Gastrocnemius medialis (tissue), 4 donors: ENCODE measurements at regions of chr7 and their contacts with region 1.

Region 1: DNA sequence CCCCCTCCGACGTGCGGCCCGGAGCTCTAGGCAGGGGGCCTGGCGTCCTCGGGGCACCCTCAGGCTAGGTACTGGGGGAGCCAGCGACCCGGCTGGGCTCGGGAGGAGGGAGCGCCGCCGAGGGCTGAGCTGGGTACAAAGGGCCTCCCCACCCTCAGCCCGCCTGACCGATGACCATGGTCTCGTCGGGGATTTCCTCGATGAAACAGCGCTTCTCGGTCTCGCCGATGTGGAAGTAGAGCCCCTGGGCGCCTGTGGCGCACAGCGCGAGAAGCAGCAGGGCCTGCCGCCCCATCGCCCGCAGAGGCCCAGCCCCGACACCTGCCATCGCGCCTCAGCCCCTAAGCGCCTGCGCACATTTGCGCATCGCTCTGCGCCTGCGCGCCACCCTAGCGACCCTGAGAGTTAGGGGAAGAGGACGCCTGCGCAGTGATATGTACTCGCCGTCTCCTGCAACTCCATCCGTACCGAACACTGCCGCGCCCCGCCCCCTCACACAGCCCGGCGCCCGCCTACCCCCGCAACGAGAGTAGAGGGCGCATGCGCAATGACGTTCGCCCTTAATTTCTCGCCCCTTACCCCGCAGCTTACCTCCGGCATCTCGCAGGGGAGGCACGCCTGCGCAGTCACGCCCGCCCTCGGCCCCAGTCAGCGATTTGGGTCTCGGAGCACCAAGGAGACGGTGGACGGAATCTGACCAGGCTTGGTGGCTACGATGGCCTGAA is at the start of gene TMED4:
- DNase-seq: peak; percentile 100
- ATAC-seq: peak; percentile 92 to 96
- H3K4me3 ChIP-seq: peak within 1 kb of the TSS; percentile 67 to 98 (median 81)
- H3K27ac ChIP-seq: peak within 1 kb of the TSS; percentile 95 to 98 (median 97)
- H3K4me1 ChIP-seq: peaks cover 14 to 28% of the 10 kb centered on the region in 2 donors
- H3K27me3 ChIP-seq: no peaks in the 10 kb centered on the region
- CTCF ChIP-seq: no peak
- POLR2A ChIP-seq: peak; percentile 86 to 93
- total RNA-seq, gene TMED4: 85.8 to 162 (median 101) TPM

Region 2: GRCh38 chr7:44082541-44083207 is 499.4 kb before region 1 on chr7:
- in situ Hi-C with region 1: no loop called
- intact Hi-C with region 1: loop called (anchors 1 kb)
- DNase-seq: peak; percentile 99
- ATAC-seq: peak; percentile 89 to 92
- H3K4me3 ChIP-seq: peak overlapping the region; percentile 60 to 98 (median 83)
- H3K27ac ChIP-seq: peak overlapping the region; percentile 90 to 96 (median 94)
- H3K4me1 ChIP-seq: peaks cover 40 to 41% of the 10 kb centered on the region in 2 donors
- H3K27me3 ChIP-seq: no peaks in the 10 kb centered on the region
- CTCF ChIP-seq: no peak
- POLR2A ChIP-seq: peak; percentile 63 to 80

Region 3: GRCh38 chr7:44665531-44666213 is 83.6 kb after region 1 on chr7:
- in situ Hi-C with region 1: no loop called
- intact Hi-C with region 1: no loop called
- DNase-seq: peak in 1 of 2 donors; percentile 6
- ATAC-seq: no peak
- H3K4me3 ChIP-seq: no peak overlapping the region
- H3K27ac ChIP-seq: peak overlapping the region; percentile 16 to 59 (median 42)
- H3K4me1 ChIP-seq: peaks cover 12 to 18% of the 10 kb centered on the region in 2 donors
- H3K27me3 ChIP-seq: no peaks in the 10 kb centered on the region
- CTCF ChIP-seq: no peak
- POLR2A ChIP-seq: no peak

Region 4: DNA sequence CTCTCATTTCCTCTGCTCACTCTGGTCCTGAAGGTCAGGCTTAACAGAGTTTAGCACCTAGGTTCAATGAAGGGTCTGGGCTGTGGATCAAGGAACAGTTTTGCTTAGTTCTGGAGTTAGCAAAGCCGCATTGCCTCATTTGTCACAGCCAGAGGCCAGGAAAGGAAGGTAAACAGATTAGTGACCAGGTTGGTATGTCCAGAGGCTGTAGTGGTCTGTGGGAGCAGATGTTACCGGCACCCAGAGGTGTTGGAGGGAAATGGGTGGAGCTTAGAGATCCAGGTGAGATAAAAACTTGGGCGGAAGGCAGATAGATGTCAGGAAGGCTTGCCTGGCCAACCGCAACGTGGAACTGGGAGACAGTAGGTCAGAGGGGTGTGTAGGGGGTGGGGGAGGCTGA is 130.0 kb after region 1 on chr7:
- in situ Hi-C with region 1: loop called in 1 of 4 experiments (anchors 25 kb)
- intact Hi-C with region 1: no loop called
- DNase-seq: no peak
- ATAC-seq: no peak
- H3K4me3 ChIP-seq: no peak overlapping the region
- H3K27ac ChIP-seq: peak overlapping the region in 3 of 4 donors; percentile 22 to 44 (median 26)
- H3K4me1 ChIP-seq: peaks cover 3 to 10% of the 10 kb centered on the region in 2 donors
- H3K27me3 ChIP-seq: no peaks in the 10 kb centered on the region
- CTCF ChIP-seq: no peak
- POLR2A ChIP-seq: no peak

Region 5: GRCh38 chr7:44769776-44770662 is 188.0 kb after region 1 on chr7:
- in situ Hi-C with region 1: loop called in 1 of 4 experiments (anchors 25 kb)
- intact Hi-C with region 1: no loop called
- DNase-seq: no peak
- ATAC-seq: no peak
- H3K4me3 ChIP-seq: peak overlapping the region in 1 of 4 donors; percentile 16
- H3K27ac ChIP-seq: peak overlapping the region; percentile 74 to 80 (median 79)
- H3K4me1 ChIP-seq: peaks cover 37 to 40% of the 10 kb centered on the region in 2 donors
- H3K27me3 ChIP-seq: no peaks in the 10 kb centered on the region
- CTCF ChIP-seq: no peak
- POLR2A ChIP-seq: no peak

Region 6: GRCh38 chr7:44847508-44847920 is 265.5 kb after region 1 on chr7:
- in situ Hi-C with region 1: loop called in 2 of 4 experiments (anchors 5 to 10 kb)
- intact Hi-C with region 1: loop called (anchors 1 kb)
- DNase-seq: peak; percentile 82 to 87
- ATAC-seq: peak; percentile 78 to 82
- H3K4me3 ChIP-seq: peak overlapping the region; percentile 65 to 72 (median 66)
- H3K27ac ChIP-seq: peak overlapping the region; percentile 90 to 93 (median 92)
- H3K4me1 ChIP-seq: peaks cover 24 to 43% of the 10 kb centered on the region in 2 donors
- H3K27me3 ChIP-seq: no peaks in the 10 kb centered on the region
- CTCF ChIP-seq: peak; percentile 92 to 98 (median 98)
- POLR2A ChIP-seq: no peak

Region 7: DNA sequence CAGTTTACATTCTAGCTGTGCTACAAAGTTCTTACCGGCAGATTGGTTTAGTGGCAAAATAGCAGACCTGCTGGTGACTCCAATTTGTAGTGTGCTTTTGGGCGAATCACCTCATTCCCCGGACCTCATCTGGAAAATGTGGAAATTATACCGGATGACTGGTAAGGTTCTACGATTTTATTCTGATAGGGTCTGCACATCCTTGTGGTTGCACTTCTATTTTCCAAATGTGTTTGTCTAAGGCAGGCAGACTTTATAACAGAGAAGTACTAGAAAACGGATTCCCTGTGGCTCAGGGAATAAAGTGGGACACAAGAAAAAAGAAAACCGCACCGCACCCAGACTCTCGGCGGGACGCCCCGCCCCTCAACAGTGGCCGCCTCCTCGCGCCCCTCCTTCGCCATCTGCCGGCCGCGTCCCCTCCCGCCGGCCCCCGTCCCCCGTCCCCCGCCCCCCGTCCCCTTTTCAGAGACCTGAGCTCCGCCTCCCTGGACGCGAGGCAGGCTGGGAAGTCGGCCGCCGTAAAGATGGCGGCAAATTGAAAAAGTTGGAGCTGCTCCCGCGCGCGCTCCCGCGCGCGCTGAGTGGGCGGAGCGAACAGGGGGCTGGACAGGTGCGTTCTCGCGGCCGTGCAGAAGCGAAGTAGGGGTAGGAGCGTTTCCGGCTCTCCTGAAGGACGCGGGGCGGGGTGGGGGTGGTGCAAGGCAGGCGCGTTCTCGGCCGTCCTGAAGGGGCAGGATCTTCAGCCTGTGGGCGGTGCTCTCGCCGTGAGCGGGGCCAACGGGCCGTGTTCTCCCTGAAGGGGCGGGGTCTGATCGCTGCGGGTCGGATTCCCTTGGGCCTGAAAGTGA is 417.4 kb after region 1 on chr7:
- in situ Hi-C with region 1: loop called in 1 of 4 experiments (anchors 10 kb)
- intact Hi-C with region 1: loop called (anchors 2 kb)
- DNase-seq: peak; percentile 99
- ATAC-seq: peak; percentile 93 to 95
- H3K4me3 ChIP-seq: peak overlapping the region; percentile 58 to 71 (median 62)
- H3K27ac ChIP-seq: peak overlapping the region; percentile 85 to 94 (median 92)
- H3K4me1 ChIP-seq: peaks cover 13 to 21% of the 10 kb centered on the region in 2 donors
- H3K27me3 ChIP-seq: no peaks in the 10 kb centered on the region
- CTCF ChIP-seq: peak in 1 of 5 experiments; percentile 22
- POLR2A ChIP-seq: peak; percentile 55 to 63